HepG2 (cell line): ENCODE measurements at regions of chr1 and their contacts with region 1.

Region 1: GRCh38 chr1:159161001-159161718 is 10.3 kb upstream of the CADM3 start:
- DNase-seq: peak; percentile 54
- ATAC-seq: peak; percentile 98
- H3K4me3 ChIP-seq: no peak overlapping the region
- H3K27ac ChIP-seq: no peak overlapping the region
- H3K4me1 ChIP-seq: no peaks in the 10 kb centered on the region
- H3K27me3 ChIP-seq: no peaks in the 10 kb centered on the region
- CTCF ChIP-seq: peak; percentile 89
- EP300 ChIP-seq: no peak
- POLR2A ChIP-seq: no peak
- RAD21 ChIP-seq: peak; percentile 84

Region 2: GRCh38 chr1:159009704-159010361 is 151.3 kb before region 1 on chr1 and contains the start of gene IFI16:
- CTCF ChIA-PET with region 1: no interaction called
- POLR2A ChIA-PET with region 1: no interaction called
- in situ Hi-C with region 1: no loop called
- intact Hi-C with region 1: no loop called
- DNase-seq: no peak
- ATAC-seq: no peak
- H3K4me3 ChIP-seq: no peak within 1 kb of the TSS
- H3K27ac ChIP-seq: no peak within 1 kb of the TSS
- H3K4me1 ChIP-seq: no peaks in the 10 kb centered on the region
- H3K27me3 ChIP-seq: peaks cover 0 to 2% of the 10 kb centered on the region in 2 experiments; a peak in 1 of 5 replicates
- CTCF ChIP-seq: no peak
- EP300 ChIP-seq: no peak
- POLR2A ChIP-seq: no peak
- RAD21 ChIP-seq: no peak
- total RNA-seq, gene IFI16: not detected in 2 replicates

Region 3: GRCh38 chr1:159197561-159198557 is 36.7 kb after region 1 on chr1:
- CTCF ChIA-PET with region 1: interaction called, 38 read pairs
- POLR2A ChIA-PET with region 1: no interaction called
- in situ Hi-C with region 1: loop called (anchors 5 kb)
- intact Hi-C with region 1: loop called (anchors 1 kb)
- DNase-seq: peak; percentile 46
- ATAC-seq: peak; percentile 92
- H3K4me3 ChIP-seq: no peak overlapping the region
- H3K27ac ChIP-seq: no peak overlapping the region
- H3K4me1 ChIP-seq: no peaks in the 10 kb centered on the region
- H3K27me3 ChIP-seq: no peaks in the 10 kb centered on the region
- CTCF ChIP-seq: peak; percentile 76
- EP300 ChIP-seq: no peak
- POLR2A ChIP-seq: no peak
- RAD21 ChIP-seq: no peak